ENCODE measurements at regions of chr1 and their contacts with region 1.

Region 1: DNA sequence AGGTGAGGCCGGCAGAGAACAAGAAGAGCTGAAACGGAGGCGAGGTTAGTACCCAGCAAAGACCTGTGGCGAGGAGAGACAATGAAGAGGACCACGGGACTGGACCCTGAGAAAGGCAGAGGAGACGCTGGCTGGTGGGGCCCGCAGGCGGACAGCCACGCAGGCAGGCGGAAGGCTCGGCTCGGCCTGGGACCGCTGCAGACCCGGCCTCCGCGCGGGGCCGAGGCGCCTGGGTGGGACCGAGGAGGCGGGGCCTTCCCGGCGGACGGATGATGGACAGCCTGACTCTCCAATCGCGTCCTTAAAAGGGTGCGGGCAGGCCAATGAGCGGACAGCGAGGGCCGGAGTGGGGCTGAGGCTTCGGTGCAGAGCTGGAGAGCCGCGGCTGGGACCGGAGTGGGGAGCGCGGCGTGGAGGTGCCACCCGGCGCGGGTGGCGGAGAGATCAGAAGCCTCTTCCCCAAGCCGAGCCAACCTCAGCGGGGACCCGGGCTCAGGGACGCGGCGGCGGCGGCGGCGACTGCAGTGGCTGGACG is at the start of gene MPZL1:
- DNase-seq: peak; percentile 95
- H3K4me3 Mint-ChIP-seq: peak within 1 kb of the TSS; percentile 84
- H3K27ac Mint-ChIP-seq: peak within 1 kb of the TSS; percentile 92
- H3K4me1 Mint-ChIP-seq: peaks cover 52% of the 10 kb centered on the region
- H3K27me3 Mint-ChIP-seq: no peaks in the 10 kb centered on the region
- CTCF ChIP-seq: no peak
- total RNA-seq, gene MPZL1: 164 and 169 TPM in 2 replicates

Region 2: GRCh38 chr1:167803358-167804207 is 81.9 kb after region 1 on chr1:
- CTCF ChIA-PET with region 1: interaction called, 32 read pairs
- POLR2A ChIA-PET with region 1: interaction called, 202 read pairs
- intact Hi-C with region 1: loop called (anchors 1 kb)
- DNase-seq: peak; percentile 95
- H3K4me3 Mint-ChIP-seq: peak overlapping the region; percentile 3
- H3K27ac Mint-ChIP-seq: no peak overlapping the region
- H3K4me1 Mint-ChIP-seq: peaks cover 43% of the 10 kb centered on the region
- H3K27me3 Mint-ChIP-seq: no peaks in the 10 kb centered on the region
- CTCF ChIP-seq: peak; percentile 97

Measured in MCF 10A (cell line).